ENCODE measurements at regions of chr18 and their contacts with region 1.

Region 1: GRCh38 chr18:26322890-26323653 is 96.8 kb downstream of the TAF4B start:
- DNase-seq: no peak
- CTCF ChIP-seq: no peak

Region 2: GRCh38 chr18:26335571-26336487 is 12.8 kb after region 1 on chr18:
- CTCF ChIA-PET with region 1: interaction called, 25 read pairs
- POLR2A ChIA-PET with region 1: no interaction called
- DNase-seq: no peak
- CTCF ChIP-seq: no peak

Region 3: DNA sequence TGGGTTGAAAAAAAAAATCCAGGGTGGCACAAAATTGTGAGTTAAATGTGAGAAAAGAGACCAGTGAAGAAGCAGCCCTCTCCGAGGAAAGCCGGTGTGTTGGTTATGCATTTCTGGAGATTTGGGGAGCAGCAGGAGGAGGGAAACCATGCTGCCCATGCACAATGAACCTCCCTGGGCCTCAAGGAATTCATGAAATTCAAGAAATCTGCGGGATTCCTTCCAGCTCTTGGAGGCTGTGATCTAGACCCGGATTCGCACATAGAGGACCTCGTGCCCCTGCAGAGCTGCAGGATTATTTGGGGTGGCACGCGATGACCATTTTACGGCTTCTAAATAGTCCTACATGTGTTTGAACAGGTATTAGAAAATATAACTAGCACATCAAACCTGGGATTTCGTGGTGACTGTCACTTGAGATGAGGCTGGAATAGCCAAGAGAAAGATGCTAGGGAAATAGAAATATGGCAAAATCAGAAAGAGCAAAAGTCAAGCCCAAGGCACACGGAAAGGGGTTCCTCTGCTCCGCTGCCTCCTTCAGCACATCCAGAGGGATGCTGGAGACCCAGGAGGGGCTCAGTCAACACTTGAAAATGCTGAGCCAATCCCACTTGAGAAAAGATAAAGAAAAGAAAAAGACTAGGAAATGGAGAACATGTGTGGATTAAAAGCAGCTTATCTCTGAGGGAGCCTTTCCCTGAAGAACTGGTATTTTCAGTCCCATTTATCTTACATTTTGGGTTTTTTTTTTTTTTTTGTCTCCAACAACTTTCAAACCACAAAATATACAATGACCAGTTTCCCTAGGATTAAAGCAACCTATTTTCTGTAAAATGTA is 203.3 kb after region 1 on chr18:
- CTCF ChIA-PET with region 1: no interaction called
- POLR2A ChIA-PET with region 1: no interaction called
- DNase-seq: no peak
- CTCF ChIP-seq: no peak

Measured in GM10248 (cell line).